A549 (cell line): ENCODE measurements at regions of chr9 and their contacts with region 1.

Region 1: DNA sequence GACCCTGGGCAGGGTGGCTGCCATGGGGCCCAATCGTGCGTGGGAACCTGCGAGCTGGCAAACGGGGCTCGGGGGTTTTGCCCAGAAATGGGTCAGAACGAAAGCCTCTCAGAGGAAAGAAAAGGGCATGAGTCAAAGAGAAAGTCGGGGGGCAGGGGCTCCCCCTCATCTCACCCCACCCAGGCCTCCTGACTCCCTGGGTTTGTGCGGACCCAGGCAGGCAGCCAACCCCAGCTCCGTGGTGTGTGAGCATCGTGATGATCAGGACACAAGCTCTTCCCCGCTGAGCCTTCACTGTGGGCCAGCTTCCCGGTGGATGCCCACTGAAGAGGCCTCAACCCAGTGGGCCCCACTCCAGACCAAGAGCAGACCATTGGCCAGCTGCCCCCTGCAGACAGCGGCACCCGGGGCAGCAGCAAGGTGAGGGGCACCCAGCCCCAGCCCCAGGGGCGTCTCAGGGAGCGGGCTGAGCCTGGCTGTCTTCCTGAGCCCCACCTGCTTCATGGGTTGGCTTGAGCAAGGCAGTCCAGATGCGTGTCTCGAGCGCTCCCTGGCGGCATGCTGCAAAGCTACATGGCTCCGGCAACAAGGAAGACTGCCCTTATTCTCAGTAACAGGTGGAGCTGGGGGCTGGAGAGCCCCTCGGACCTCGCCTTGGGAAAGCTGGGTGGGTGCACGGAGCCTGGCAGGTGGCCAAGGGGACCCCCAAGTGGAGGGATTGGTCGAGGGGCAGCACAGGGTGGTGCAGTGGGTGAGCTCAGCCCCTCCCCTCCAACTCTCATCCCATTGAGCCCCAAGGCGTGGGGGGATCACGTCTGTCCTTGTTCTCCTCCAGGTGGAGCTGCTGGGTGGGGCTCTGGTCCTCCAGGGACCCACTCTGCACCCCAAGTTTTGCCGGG is 3.2 kb upstream of the FUT7 start:
- DNase-seq: peak; percentile 90 to 92
- ATAC-seq: peak; percentile 76 to 94
- H3K4me3 ChIP-seq: no peak overlapping the region
- H3K27ac ChIP-seq: peak overlapping the region; percentile 34 to 67; a peak in 4 of 6 replicates
- H3K4me1 ChIP-seq: peaks cover 18% of the 10 kb centered on the region
- CTCF ChIP-seq: peak; percentile 86
- EP300 ChIP-seq: no peak
- POLR2A ChIP-seq: no peak
- RAD21 ChIP-seq: peak; percentile 82 to 92

Region 2: DNA sequence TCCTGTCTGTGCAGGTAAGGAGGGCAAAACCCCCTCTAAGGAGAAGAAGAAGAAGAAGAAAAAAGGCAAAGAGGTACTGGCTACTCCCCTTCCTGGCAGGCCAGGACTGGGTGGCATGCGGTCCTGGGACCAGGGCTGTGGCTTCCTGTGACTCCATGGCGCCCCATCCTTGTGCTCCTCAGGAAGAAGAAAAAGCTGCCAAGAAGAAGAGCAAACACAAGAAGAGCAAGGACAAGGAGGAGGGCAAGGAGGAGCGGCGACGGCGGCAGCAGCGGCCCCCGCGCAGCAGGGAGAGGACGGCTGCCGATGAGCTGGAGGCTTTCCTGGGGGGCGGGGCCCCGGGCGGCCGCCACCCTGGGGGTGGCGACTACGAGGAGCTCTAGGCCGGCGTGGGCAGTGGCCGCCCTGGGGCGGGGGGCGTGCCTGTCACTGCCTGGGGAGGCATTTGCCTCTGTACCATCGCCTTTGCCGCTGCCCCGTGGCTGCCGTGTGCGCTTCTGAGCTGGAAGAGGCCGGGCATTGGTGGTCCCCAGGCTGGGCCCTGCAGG is 194.9 kb before region 1 on chr9:
- CTCF ChIA-PET with region 1: interaction called, 13 read pairs
- POLR2A ChIA-PET with region 1: no interaction called
- DNase-seq: no peak
- ATAC-seq: no peak
- H3K4me3 ChIP-seq: no peak overlapping the region
- H3K27ac ChIP-seq: peak overlapping the region in 1 of 2 experiments; percentile 90; a peak in 3 of 6 replicates
- H3K4me1 ChIP-seq: peaks cover 56% of the 10 kb centered on the region
- CTCF ChIP-seq: no peak
- EP300 ChIP-seq: no peak
- POLR2A ChIP-seq: no peak
- RAD21 ChIP-seq: no peak

Region 3: DNA sequence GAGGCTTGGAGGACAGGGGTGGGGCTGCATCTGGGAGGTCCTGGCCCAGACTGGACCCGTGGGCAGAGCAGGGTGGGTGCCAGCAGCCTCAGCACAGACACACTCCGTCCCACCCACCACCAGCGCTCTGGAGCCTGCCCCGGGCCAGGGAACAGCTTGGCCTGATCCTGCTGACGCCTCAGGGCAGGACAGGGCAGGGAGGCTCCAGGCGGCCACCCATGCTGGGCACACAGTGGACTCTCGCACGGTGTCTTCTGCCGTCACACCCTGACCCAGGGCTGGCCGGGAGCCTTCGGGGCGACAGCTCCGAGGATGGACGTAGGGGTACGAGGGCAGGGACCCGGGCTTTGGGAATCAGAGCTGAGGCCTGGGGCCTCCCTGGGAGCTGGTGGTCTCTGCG is 66.0 kb before region 1 on chr9:
- CTCF ChIA-PET with region 1: interaction called, 15 read pairs
- POLR2A ChIA-PET with region 1: no interaction called
- DNase-seq: no peak
- ATAC-seq: peak in 1 of 2 experiments; percentile 15; a peak in 2 of 6 replicates
- H3K4me3 ChIP-seq: no peak overlapping the region
- H3K27ac ChIP-seq: no peak overlapping the region
- H3K4me1 ChIP-seq: peaks cover 9% of the 10 kb centered on the region; the same call in 2 of the 3 replicates
- CTCF ChIP-seq: no peak
- EP300 ChIP-seq: no peak
- POLR2A ChIP-seq: no peak
- RAD21 ChIP-seq: no peak

Region 4: GRCh38 chr9:137000177-137000883 is 34.8 kb before region 1 on chr9:
- CTCF ChIA-PET with region 1: interaction called, 37 read pairs
- POLR2A ChIA-PET with region 1: interaction called, 3 read pairs
- DNase-seq: no peak
- ATAC-seq: no peak
- H3K4me3 ChIP-seq: no peak overlapping the region
- H3K27ac ChIP-seq: 0 out of 6 replicates have a peak overlapping the region, but pooled peaks of 1 of the 2 experiments have one; percentile 15
- H3K4me1 ChIP-seq: peaks cover 41% of the 10 kb centered on the region
- CTCF ChIP-seq: no peak
- EP300 ChIP-seq: no peak
- POLR2A ChIP-seq: no peak
- RAD21 ChIP-seq: no peak

Region 5: GRCh38 chr9:137046098-137046787 is 11.1 kb after region 1 on chr9 and contains the start of gene NPDC1:
- CTCF ChIA-PET with region 1: interaction called, 169 read pairs
- POLR2A ChIA-PET with region 1: no interaction called
- DNase-seq: peak; percentile 83 to 94
- ATAC-seq: peak; percentile 68 to 76
- H3K4me3 ChIP-seq: peak within 1 kb of the TSS; percentile 71
- H3K27ac ChIP-seq: peak within 1 kb of the TSS; percentile 77 to 92
- H3K4me1 ChIP-seq: peaks cover 15% of the 10 kb centered on the region
- CTCF ChIP-seq: peak; percentile 70
- EP300 ChIP-seq: no peak
- POLR2A ChIP-seq: peak; percentile 60
- RAD21 ChIP-seq: peak; percentile 71 to 77
- polyA plus RNA-seq, gene NPDC1: 12.7 and 13.0 TPM in 2 replicates

Region 6: GRCh38 chr9:137077010-137077747 is 42.1 kb after region 1 on chr9 and contains the start of gene UAP1L1:
- CTCF ChIA-PET with region 1: interaction called, 207 read pairs
- POLR2A ChIA-PET with region 1: no interaction called
- DNase-seq: peak in 1 of 2 experiments; percentile 44
- ATAC-seq: peak; percentile 62 to 67
- H3K4me3 ChIP-seq: peak within 1 kb of the TSS; percentile 66
- H3K27ac ChIP-seq: peak within 1 kb of the TSS; percentile 72 to 92
- H3K4me1 ChIP-seq: peaks cover 11% of the 10 kb centered on the region
- CTCF ChIP-seq: no peak
- EP300 ChIP-seq: no peak
- POLR2A ChIP-seq: no peak
- RAD21 ChIP-seq: no peak
- polyA plus RNA-seq, gene UAP1L1: 1.2 and 1.9 TPM in 2 replicates

Region 7: GRCh38 chr9:137254624-137255447 is 219.7 kb after region 1 on chr9 and contains the start of gene NELFB:
- CTCF ChIA-PET with region 1: no interaction called
- POLR2A ChIA-PET with region 1: no interaction called
- DNase-seq: peak; percentile 83 to 98
- ATAC-seq: peak; percentile 71 to 83
- H3K4me3 ChIP-seq: peak within 1 kb of the TSS; percentile 93
- H3K27ac ChIP-seq: peak within 1 kb of the TSS; percentile 90 to 98
- H3K4me1 ChIP-seq: peaks cover 20% of the 10 kb centered on the region
- CTCF ChIP-seq: no peak
- EP300 ChIP-seq: 0 out of 5 replicates have a peak, but pooled peaks of 1 of the 2 experiments have one; percentile 36
- POLR2A ChIP-seq: peak; percentile 90
- RAD21 ChIP-seq: no peak
- polyA plus RNA-seq, gene NELFB: 31.8 and 33.8 TPM in 2 replicates